Gastrocnemius medialis (tissue), 4 donors: ENCODE measurements at regions of chr2 and their contacts with region 1.

Region 1: GRCh38 chr2:131126436-131126835 is 21.3 kb downstream of the PLEKHB2 start:
- DNase-seq: peak in 1 of 2 donors; percentile 48
- ATAC-seq: peak; percentile 22 to 59
- H3K4me3 ChIP-seq: no peak overlapping the region
- H3K27ac ChIP-seq: peak overlapping the region in 3 of 4 donors; percentile 82 to 90 (median 86)
- H3K4me1 ChIP-seq: peaks cover 32 to 36% of the 10 kb centered on the region in 2 donors
- H3K27me3 ChIP-seq: no peaks in the 10 kb centered on the region
- CTCF ChIP-seq: no peak
- POLR2A ChIP-seq: no peak

Region 2: DNA sequence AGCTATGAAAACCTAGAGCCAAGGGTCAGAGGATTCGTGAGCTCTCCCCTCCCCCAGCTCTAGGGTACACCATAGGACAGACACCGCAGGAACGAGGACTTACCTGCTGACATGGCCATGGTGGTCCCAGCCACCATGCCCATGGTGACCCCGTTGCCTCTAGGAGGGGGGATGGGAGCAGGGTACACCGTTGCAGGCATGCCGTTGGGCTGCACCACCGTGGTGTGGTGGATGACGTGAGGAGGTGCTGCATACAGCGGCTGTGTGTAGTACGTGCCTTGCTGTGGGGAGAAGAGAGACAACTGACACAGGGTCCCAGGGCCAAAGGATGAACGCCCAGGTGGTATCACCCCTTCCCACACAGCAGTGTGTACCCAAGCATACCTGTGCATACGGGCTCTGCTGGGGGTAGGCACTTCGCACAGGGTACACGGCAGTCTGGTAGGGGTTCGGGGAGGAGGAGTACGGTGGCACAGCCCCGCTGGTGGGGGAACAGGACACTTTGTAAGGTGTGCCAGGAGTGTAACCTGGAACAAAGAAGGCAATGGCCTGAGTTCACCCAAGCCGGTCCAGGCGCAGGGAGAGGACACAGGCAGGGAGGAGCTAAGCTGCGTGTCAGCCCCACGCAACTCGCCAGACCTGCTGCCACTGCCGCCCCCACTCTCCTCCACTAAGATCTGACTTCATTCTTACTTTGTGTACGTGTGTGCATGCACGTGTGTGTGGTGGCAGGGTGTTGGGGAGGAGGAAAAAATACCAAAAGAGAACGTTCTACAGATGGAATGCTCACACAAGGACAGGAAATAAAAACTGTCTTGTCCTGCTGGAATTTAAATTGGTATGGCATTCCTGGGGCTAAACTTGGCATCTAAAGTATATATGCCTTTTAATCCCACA is 71.0 kb before region 1 on chr2:
- in situ Hi-C with region 1: no loop called
- intact Hi-C with region 1: loop called (anchors 2 kb)
- DNase-seq: peak in 1 of 2 donors; percentile 61
- ATAC-seq: peak in 1 of 2 donors; percentile 54
- H3K4me3 ChIP-seq: peak overlapping the region in 1 of 4 donors; percentile 7
- H3K27ac ChIP-seq: peak overlapping the region; percentile 68 to 77 (median 74)
- H3K4me1 ChIP-seq: peaks cover 37 to 50% of the 10 kb centered on the region in 2 donors
- H3K27me3 ChIP-seq: no peaks in the 10 kb centered on the region
- CTCF ChIP-seq: no peak
- POLR2A ChIP-seq: no peak

Region 3: DNA sequence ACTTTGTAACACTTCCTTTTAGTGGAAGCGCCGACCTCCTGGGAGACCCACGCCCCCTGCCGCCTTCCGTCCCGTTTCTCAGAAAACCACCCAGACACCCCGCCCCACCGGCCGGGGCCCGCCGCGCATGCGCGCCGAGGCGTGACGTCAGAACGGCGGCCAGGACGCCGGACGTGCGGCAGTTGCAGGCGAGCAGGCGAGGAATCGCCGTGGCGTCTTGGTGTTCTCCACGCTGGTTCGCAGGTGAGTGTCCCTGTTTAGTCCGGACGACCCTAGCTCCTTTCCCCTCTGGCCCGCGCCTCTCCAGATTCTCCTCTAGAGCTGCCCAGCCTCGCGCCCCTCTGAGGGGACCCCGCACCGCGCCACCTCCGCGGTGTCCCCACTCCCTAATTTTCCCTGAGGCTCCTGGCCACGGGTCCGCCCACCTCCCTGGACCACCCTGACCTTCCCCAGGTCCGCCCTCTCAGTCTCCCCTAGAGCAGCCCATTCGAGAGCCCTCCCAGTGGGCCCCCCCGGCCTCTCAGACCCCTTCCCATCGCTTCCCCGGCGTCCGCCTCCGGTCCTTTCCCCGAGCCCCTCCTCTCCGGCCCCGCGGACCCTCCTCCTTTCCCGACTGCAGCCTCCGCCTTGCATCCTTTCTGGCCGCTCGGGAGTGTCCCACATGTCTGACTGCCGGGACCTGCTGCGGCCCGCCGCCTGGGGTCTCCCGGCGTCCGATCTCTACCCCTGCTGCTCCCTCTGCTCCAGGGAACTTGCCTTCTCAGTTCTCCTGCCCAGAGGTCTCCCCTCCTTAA is 21.1 kb before region 1 on chr2 and contains the start of gene PLEKHB2:
- in situ Hi-C with region 1: no loop called
- intact Hi-C with region 1: loop called (anchors 2 kb)
- DNase-seq: peak; percentile 80 to 87
- ATAC-seq: peak; percentile 71 to 79
- H3K4me3 ChIP-seq: peak within 1 kb of the TSS; percentile 81 to 98 (median 94)
- H3K27ac ChIP-seq: peak within 1 kb of the TSS; percentile 95 to 99 (median 96)
- H3K4me1 ChIP-seq: peaks cover 21 to 29% of the 10 kb centered on the region in 2 donors
- H3K27me3 ChIP-seq: no peaks in the 10 kb centered on the region
- CTCF ChIP-seq: peak in 3 of 5 experiments; percentile 10 to 27 (median 21)
- POLR2A ChIP-seq: peak; percentile 93 to 97
- total RNA-seq, gene PLEKHB2: 24.0 to 105 (median 68.3) TPM